Astrocyte of the cerebellum (primary cell): ENCODE measurements at regions of chr11 and their contacts with region 1.

Region 1: GRCh38 chr11:66624087-66624849 is 7.8 kb downstream of the RBM14 start:
- DNase-seq: no peak
- H3K4me3 ChIP-seq: no peak overlapping the region
- CTCF ChIP-seq: no peak

Region 2: GRCh38 chr11:66539170-66539869 is 84.9 kb before region 1 on chr11:
- in situ Hi-C with region 1: no loop called
- DNase-seq: no peak
- H3K4me3 ChIP-seq: no peak overlapping the region
- CTCF ChIP-seq: no peak

Region 3: DNA sequence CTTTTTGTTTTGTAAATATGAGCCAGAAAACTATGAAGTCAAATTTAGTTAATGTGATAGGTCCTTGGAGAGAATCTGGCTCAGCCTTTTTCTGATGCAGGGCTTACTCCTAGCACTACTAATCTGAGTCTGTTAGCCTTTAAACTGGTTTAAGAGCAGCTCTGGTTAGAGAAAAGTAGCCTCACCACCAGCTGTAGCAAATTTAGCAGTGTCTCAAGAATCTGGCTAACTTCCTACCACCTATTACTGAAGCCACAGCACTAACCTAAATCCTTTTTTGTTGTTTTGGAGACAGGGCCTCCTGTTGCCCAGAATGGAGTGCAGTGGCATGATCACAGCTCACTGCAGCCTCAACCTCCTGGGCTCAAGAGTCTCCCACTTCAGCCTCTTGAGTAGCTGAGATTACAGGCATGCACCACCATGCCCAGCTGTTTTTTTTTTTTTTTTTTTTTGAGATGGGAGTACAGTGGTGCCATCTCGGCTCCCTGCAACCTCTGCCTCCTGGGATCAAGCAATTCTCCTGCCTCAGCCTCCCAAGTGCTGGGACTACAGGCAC is 39.6 kb after region 1 on chr11:
- in situ Hi-C with region 1: no loop called
- DNase-seq: no peak
- H3K4me3 ChIP-seq: no peak overlapping the region
- CTCF ChIP-seq: no peak

Region 4: GRCh38 chr11:66677599-66678375 is 53.5 kb after region 1 on chr11 and contains the start of gene RBM4B:
- in situ Hi-C with region 1: loop called (anchors 5 kb)
- DNase-seq: peak; percentile 85
- H3K4me3 ChIP-seq: peak within 1 kb of the TSS; percentile 71
- CTCF ChIP-seq: no peak